ENCODE measurements at regions of chr2 and their contacts with region 1.

Region 1: GRCh38 chr2:96485751-96486651 is 19.2 kb downstream of the NEURL3 start:
- H3K4me3 Mint-ChIP-seq: peak overlapping the region; percentile 93
- H3K27ac Mint-ChIP-seq: peak overlapping the region; percentile 99
- H3K4me1 Mint-ChIP-seq: peaks cover 81% of the 10 kb centered on the region
- H3K27me3 Mint-ChIP-seq: no peaks in the 10 kb centered on the region

Region 2: DNA sequence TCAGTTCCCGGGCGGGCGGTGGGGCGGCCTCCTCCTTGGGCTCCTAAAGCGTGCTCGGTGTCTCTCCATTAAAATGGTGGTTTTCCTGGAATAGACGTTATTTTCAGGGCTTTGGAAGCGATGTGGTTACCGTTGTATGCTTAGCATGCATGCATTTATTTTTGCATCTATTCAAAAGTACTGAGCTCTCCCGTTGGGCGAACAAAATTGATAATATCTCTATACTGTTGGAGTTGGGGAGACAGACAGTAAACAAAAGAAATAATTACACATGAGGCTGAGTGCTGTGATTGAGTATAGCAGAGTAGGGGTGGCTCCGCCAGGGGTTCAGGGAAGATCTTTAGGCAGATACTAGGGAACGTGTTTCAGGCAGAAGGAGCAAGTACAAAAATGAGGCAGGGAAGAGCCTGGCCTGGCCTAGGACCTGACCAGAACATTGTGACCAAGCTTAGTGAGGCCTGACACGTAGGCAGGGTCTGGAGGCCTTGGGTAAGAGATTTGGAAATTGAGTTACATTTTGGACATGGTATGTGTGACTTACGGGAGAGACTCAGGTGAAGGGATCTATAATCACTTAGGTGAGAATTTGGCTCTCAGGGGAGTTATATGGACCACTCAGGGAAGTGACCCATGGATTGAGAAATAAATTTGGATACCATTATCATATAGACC is 149.8 kb before region 1 on chr2:
- intact Hi-C with region 1: no loop called
- H3K4me3 Mint-ChIP-seq: peak overlapping the region; percentile 83
- H3K27ac Mint-ChIP-seq: peak overlapping the region; percentile 98
- H3K4me1 Mint-ChIP-seq: peaks cover 89% of the 10 kb centered on the region
- H3K27me3 Mint-ChIP-seq: no peaks in the 10 kb centered on the region

Region 3: GRCh38 chr2:96536445-96537065 is 50.6 kb after region 1 on chr2 and contains the start of gene ARID5A:
- intact Hi-C with region 1: loop called (anchors 2 kb)
- H3K4me3 Mint-ChIP-seq: peak within 1 kb of the TSS; percentile 96
- H3K27ac Mint-ChIP-seq: peak within 1 kb of the TSS; percentile 94
- H3K4me1 Mint-ChIP-seq: peaks cover 75% of the 10 kb centered on the region
- H3K27me3 Mint-ChIP-seq: peaks cover 2% of the 10 kb centered on the region

Region 4: DNA sequence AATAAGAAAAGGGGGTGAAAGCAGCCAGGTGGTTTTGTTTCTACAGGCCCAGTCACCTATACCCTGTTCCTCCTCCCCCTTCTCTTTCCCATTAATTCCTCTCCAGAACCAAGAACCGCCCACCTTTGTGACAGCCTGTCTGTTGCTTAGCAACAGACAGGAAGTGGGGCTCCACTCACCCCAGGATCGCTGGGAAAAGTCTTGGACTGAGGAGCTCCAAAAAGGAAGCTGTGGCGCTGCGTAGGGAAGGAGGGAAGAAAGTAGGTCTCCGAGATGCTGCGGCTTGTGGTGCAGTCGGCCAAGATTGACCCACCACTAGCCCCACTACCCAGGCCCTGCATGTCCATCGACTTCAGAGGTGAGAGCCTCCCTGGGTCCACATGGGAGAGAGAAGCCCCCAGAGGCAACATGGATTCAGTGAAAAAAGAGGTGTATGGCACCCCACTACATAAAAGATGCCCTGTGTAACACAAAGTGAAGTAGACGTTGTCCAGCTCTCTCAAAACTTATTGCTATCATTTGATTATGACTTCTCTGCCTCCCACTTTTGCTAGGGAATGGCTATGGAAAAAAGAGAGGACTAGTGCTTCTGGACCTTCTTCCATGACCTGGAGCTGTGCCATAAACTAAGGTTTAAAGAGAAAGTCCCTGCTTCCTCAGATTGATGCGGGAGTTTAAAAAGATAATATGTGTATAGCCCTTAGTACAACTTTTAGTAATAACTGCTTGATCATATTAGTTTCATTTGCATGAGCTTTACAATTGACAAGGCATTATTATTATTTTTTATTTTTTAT is 156.8 kb after region 1 on chr2 and contains the start of gene FER1L5:
- intact Hi-C with region 1: no loop called
- H3K4me3 Mint-ChIP-seq: no peak within 1 kb of the TSS
- H3K27ac Mint-ChIP-seq: no peak within 1 kb of the TSS
- H3K4me1 Mint-ChIP-seq: no peaks in the 10 kb centered on the region
- H3K27me3 Mint-ChIP-seq: peaks cover 2% of the 10 kb centered on the region

Region 5: GRCh38 chr2:96788442-96789244 is 302.6 kb after region 1 on chr2:
- intact Hi-C with region 1: no loop called
- H3K4me3 Mint-ChIP-seq: no peak overlapping the region
- H3K27ac Mint-ChIP-seq: no peak overlapping the region
- H3K4me1 Mint-ChIP-seq: peaks cover 7% of the 10 kb centered on the region
- H3K27me3 Mint-ChIP-seq: no peaks in the 10 kb centered on the region